Uterus (tissue), 4 donors: ENCODE measurements at regions of chr4 and their contacts with region 1.

Region 1: DNA sequence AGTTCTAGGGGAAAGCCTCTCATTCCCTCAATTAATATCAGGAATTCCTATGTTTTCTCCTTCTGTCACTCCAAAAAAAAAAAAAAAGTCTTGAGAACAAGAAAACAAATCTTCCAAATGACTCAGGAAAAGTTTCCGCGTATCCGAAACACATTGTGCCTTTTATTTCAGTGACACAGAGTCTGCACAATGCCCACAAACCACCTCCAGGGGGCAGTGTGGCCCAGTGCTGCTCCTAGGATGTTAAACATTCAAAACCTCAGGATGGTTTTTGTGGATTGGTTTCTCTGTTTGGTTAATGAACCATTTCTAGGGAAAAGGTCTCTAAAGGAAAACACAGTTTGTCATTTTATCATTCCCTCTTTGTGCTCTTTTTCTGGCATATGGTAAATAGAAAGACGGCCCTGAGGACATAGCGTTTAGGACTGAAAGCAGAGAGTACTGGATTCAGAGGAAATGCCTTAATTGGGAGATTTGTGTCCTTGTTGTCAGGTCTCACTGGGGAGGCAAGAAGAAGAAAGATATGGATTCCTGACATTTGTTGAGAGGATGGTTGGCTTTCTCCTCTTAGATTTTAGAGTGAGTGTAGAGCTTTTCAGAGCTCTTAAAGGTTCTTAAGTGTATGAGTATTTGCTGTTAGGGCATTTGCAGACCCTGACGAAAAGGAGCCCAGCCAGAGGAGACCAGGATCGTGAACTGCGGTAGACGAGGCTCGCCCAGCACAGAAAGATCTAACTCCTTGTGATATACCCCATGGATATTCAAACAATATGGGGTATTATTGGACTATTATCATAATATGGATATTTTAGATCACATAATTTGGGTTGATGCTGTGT is 65.7 kb upstream of the MAP9 start:
- DNase-seq: peak; percentile 86
- H3K4me3 ChIP-seq: no peak overlapping the region
- H3K27ac ChIP-seq: peak overlapping the region; percentile 46 to 65
- H3K4me1 ChIP-seq: peaks cover 0 to 4% of the 10 kb centered on the region in 2 donors
- H3K27me3 ChIP-seq: no peaks in the 10 kb centered on the region
- CTCF ChIP-seq: peak; percentile 87 to 98 (median 90)
- POLR2A ChIP-seq: no peak

Region 2: GRCh38 chr4:155367608-155368007 is 74.9 kb before region 1 on chr4:
- intact Hi-C with region 1: no loop called
- DNase-seq: no peak
- H3K4me3 ChIP-seq: no peak overlapping the region
- H3K27ac ChIP-seq: no peak overlapping the region
- H3K4me1 ChIP-seq: no peaks in the 10 kb centered on the region
- H3K27me3 ChIP-seq: no peaks in the 10 kb centered on the region
- CTCF ChIP-seq: no peak
- POLR2A ChIP-seq: no peak

Region 3: GRCh38 chr4:155403886-155404285 is 38.6 kb before region 1 on chr4:
- intact Hi-C with region 1: no loop called
- DNase-seq: no peak
- H3K4me3 ChIP-seq: no peak overlapping the region
- H3K27ac ChIP-seq: no peak overlapping the region
- H3K4me1 ChIP-seq: no peaks in the 10 kb centered on the region
- H3K27me3 ChIP-seq: no peaks in the 10 kb centered on the region
- CTCF ChIP-seq: peak; percentile 43 to 56 (median 48)
- POLR2A ChIP-seq: no peak

Region 4: GRCh38 chr4:155787113-155787710 is 344.7 kb after region 1 on chr4:
- intact Hi-C with region 1: loop called (anchors 5 kb)
- DNase-seq: no peak
- H3K4me3 ChIP-seq: no peak overlapping the region
- H3K27ac ChIP-seq: no peak overlapping the region
- H3K4me1 ChIP-seq: no peaks in the 10 kb centered on the region
- H3K27me3 ChIP-seq: no peaks in the 10 kb centered on the region
- CTCF ChIP-seq: peak; percentile 62 to 88 (median 70)
- POLR2A ChIP-seq: no peak